Mammary epithelial cell (primary cell): ENCODE measurements at regions of chr6 and their contacts with region 1.

Region 1: DNA sequence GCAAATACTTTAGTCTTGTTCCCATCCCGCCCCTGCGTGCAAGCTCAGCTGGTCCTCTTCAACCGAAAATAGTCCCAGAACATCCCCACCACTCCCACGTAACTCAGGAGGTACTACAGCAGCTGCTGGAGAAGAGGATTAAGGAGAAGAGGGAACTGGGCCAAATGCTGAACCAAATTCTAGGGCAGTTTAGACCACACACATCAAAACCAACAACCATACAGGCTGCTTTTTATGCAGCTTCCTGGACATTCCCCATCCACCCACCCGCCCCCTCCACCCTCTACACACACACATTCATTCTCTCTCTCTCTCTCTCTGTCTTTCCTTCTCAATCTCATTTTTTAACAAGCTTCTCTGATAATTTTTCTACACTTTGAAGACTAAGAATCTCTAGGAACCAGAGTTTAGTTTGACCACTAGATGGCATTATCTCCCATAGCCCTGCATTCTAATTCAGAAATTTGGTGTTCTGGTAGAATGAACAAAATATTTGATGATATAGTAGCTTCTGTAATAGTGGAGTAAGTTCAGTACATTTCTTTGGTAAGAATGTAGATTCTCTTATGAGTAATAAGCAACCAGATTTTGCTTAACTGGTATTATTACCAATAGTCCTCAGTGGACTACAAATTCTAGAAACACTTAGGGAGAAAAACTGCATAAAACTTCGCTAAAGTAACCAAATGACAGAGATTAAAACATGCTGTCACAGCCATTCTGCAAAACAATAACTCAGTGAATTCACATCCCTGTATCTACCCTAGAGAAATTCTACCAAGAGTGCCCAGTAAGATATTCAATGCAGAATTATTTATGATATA is 52.1 kb upstream of the BEND6 start:
- DNase-seq: peak; percentile 31
- H3K4me3 ChIP-seq: no peak overlapping the region
- H3K27ac ChIP-seq: no peak overlapping the region
- H3K4me1 ChIP-seq: peaks cover 15% of the 10 kb centered on the region
- H3K27me3 ChIP-seq: no peaks in the 10 kb centered on the region
- CTCF ChIP-seq: peak; percentile 56 to 68

Region 2: GRCh38 chr6:56961157-56961556 is 58.3 kb after region 1 on chr6:
- CTCF ChIA-PET with region 1: interaction called, 4 read pairs
- dilution Hi-C with region 1: no loop called
- in situ Hi-C with region 1: loop called in 1 of 2 experiments (anchors 10 kb)
- intact Hi-C with region 1: loop called (anchors 1 kb)
- DNase-seq: peak; percentile 33
- H3K4me3 ChIP-seq: no peak overlapping the region
- H3K27ac ChIP-seq: no peak overlapping the region
- H3K4me1 ChIP-seq: peaks cover 27% of the 10 kb centered on the region
- H3K27me3 ChIP-seq: no peaks in the 10 kb centered on the region
- CTCF ChIP-seq: peak in 1 of 2 donors; percentile 23

Region 3: GRCh38 chr6:57021086-57021720 is 118.3 kb after region 1 on chr6:
- CTCF ChIA-PET with region 1: interaction called, 3 read pairs
- dilution Hi-C with region 1: no loop called
- in situ Hi-C with region 1: loop called (anchors 10 to 25 kb)
- intact Hi-C with region 1: loop called (anchors 1 kb)
- DNase-seq: peak; percentile 30
- H3K4me3 ChIP-seq: no peak overlapping the region
- H3K27ac ChIP-seq: no peak overlapping the region
- H3K4me1 ChIP-seq: no peaks in the 10 kb centered on the region
- H3K27me3 ChIP-seq: no peaks in the 10 kb centered on the region
- CTCF ChIP-seq: peak; percentile 47 to 53

Region 4: DNA sequence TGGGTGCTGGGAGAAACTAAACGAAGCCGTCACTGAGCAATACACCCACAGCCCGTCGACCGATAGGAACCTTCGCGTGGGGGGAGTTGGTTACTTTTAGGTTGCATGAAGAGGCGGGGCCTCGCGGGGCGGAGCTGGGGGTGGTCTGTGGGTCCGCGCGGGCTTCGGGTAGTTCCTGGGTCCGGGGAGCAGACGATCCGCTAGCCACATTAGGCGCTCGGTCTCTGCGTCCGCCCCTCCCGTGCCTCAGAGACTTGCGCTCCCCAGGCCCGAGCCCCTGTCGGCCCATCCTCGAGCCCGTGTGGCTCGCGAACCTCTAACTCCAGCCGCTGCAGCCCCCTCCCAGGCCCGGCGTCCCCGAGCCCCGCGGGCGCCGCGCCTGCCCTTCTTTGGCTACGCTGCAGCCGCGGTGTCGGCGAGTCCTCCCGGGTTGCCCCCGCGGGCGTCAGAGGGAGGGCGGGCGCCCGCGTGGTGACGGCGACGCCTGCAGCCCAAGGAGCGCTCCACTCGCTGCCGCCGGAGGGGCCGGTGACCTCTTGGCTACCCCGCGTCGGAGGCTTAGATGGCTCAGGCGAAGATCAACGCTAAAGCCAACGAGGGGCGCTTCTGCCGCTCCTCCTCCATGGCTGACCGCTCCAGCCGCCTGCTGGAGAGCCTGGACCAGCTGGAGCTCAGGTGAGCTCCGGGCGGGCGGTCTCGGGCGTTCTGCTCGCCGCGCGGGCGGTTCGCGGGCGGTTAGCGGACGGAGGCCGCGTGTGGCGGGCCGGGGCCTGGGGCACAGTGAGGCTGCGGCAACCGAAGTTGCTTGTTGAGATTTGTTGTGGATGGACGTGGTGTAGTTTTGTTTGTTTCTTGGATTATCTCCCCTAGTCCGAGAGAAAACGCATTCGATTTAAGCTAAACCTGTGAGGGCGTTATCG is 269.5 kb after region 1 on chr6 and contains the start of gene BAG2:
- CTCF ChIA-PET with region 1: no interaction called
- dilution Hi-C with region 1: no loop called
- in situ Hi-C with region 1: no loop called
- intact Hi-C with region 1: loop called (anchors 10 kb)
- DNase-seq: peak; percentile 71
- H3K4me3 ChIP-seq: peak within 1 kb of the TSS; percentile 49 to 65 (median 59)
- H3K27ac ChIP-seq: peak within 1 kb of the TSS; percentile 45
- H3K4me1 ChIP-seq: peaks cover 15% of the 10 kb centered on the region
- H3K27me3 ChIP-seq: no peaks in the 10 kb centered on the region
- CTCF ChIP-seq: peak in 1 of 2 donors; percentile 25
- total RNA-seq, gene BAG2: 2.1 to 2.3 TPM